Activated CD4-positive, alpha-beta T cell treated with anti-CD3 and anti-CD28 coated beads for 36 hours (primary cell): ENCODE measurements at regions of chr6 and their contacts with region 1.

Region 1: GRCh38 chr6:136262940-136263339 is 12.8 kb upstream of the MTFR2 start:
- DNase-seq: no peak
- ATAC-seq: no peak
- H3K4me3 Mint-ChIP-seq: no peak overlapping the region
- H3K27ac Mint-ChIP-seq: peak overlapping the region; percentile 2
- H3K4me1 Mint-ChIP-seq: peaks cover 20% of the 10 kb centered on the region
- H3K27me3 Mint-ChIP-seq: no peaks in the 10 kb centered on the region

Region 2: GRCh38 chr6:135962731-135963130 is 300.2 kb before region 1 on chr6:
- CTCF ChIA-PET with region 1: no interaction called
- POLR2A ChIA-PET with region 1: no interaction called
- intact Hi-C with region 1: no loop called
- DNase-seq: no peak
- ATAC-seq: no peak
- H3K4me3 Mint-ChIP-seq: no peak overlapping the region
- H3K27ac Mint-ChIP-seq: no peak overlapping the region
- H3K4me1 Mint-ChIP-seq: no peaks in the 10 kb centered on the region
- H3K27me3 Mint-ChIP-seq: no peaks in the 10 kb centered on the region

Region 3: GRCh38 chr6:136007345-136007744 is 255.6 kb before region 1 on chr6:
- CTCF ChIA-PET with region 1: no interaction called
- POLR2A ChIA-PET with region 1: no interaction called
- intact Hi-C with region 1: no loop called
- DNase-seq: no peak
- ATAC-seq: no peak
- H3K4me3 Mint-ChIP-seq: no peak overlapping the region
- H3K27ac Mint-ChIP-seq: no peak overlapping the region
- H3K4me1 Mint-ChIP-seq: no peaks in the 10 kb centered on the region
- H3K27me3 Mint-ChIP-seq: peaks cover 3% of the 10 kb centered on the region

Region 4: DNA sequence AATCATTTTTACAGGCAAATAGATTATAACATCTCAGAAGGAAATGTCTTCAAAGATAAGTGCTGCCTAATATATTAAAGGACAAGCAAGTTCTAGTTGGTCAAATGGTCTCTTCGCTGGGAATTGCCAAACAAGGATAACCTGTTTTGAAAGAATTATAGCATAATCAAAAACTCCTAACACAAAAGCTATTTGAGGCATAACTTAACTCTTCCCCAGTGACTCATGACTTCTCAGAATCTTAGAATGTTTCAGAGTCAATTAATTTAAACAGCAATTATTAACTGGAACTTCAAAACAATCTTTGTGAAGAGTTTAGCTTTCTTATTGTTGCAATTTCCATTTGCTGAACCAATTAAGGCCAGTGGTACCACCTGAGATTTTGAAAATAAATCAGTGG is 139.5 kb before region 1 on chr6:
- CTCF ChIA-PET with region 1: no interaction called
- POLR2A ChIA-PET with region 1: no interaction called
- intact Hi-C with region 1: no loop called
- DNase-seq: no peak
- ATAC-seq: no peak
- H3K4me3 Mint-ChIP-seq: no peak overlapping the region
- H3K27ac Mint-ChIP-seq: no peak overlapping the region
- H3K4me1 Mint-ChIP-seq: no peaks in the 10 kb centered on the region
- H3K27me3 Mint-ChIP-seq: no peaks in the 10 kb centered on the region

Region 5: GRCh38 chr6:136280032-136280609 is 17.2 kb after region 1 on chr6:
- CTCF ChIA-PET with region 1: interaction called, 3 read pairs
- POLR2A ChIA-PET with region 1: interaction called, 3 read pairs
- intact Hi-C with region 1: loop called in 1 of 2 experiments (anchors 2 kb)
- DNase-seq: no peak
- ATAC-seq: no peak
- H3K4me3 Mint-ChIP-seq: no peak overlapping the region
- H3K27ac Mint-ChIP-seq: no peak overlapping the region
- H3K4me1 Mint-ChIP-seq: peaks cover 66% of the 10 kb centered on the region
- H3K27me3 Mint-ChIP-seq: no peaks in the 10 kb centered on the region

Region 6: GRCh38 chr6:136326038-136326553 is 63.2 kb after region 1 on chr6:
- CTCF ChIA-PET with region 1: no interaction called
- POLR2A ChIA-PET with region 1: no interaction called
- intact Hi-C with region 1: no loop called
- DNase-seq: no peak
- ATAC-seq: no peak
- H3K4me3 Mint-ChIP-seq: no peak overlapping the region
- H3K27ac Mint-ChIP-seq: no peak overlapping the region
- H3K4me1 Mint-ChIP-seq: no peaks in the 10 kb centered on the region
- H3K27me3 Mint-ChIP-seq: no peaks in the 10 kb centered on the region